Head of caudate nucleus (tissue), 42 donors: ENCODE measurements at regions of chr1 and their contacts with region 1.

Region 1: GRCh38 chr1:167599957-167600581 is 30.0 kb upstream of the RCSD1 start:
- DNase-seq: peak in 24 of 42 donors; percentile 3 to 63 (median 30)

Region 2: DNA sequence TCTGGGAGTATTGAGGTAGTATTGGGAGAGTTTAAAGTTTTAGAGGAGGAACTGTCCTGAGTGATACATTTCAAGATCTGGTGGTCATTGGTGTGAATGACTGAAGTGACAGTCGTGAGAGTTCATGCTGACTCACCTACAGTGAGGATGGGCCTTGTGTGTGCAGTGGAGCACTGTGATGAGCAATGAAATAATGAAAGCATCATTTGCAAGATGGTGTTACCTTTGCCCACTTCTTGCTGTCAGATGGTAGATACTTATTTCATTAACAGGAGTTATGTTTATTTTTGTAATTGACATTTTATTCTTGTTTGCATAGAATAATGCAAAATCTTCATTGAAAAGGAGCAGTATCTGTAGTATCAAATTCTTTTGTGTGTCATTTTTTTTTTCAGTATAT is 350.4 kb before region 1 on chr1:
- intact Hi-C with region 1: no loop called
- DNase-seq: no peak

Region 3: GRCh38 chr1:167687919-167688519 is 88.0 kb after region 1 on chr1:
- intact Hi-C with region 1: loop called (anchors 2 kb)
- DNase-seq: peak in 40 of 42 donors; percentile 38 to 94 (median 83)